H1 (cell line): ENCODE measurements at regions of chr22 and their contacts with region 1.

Region 1: DNA sequence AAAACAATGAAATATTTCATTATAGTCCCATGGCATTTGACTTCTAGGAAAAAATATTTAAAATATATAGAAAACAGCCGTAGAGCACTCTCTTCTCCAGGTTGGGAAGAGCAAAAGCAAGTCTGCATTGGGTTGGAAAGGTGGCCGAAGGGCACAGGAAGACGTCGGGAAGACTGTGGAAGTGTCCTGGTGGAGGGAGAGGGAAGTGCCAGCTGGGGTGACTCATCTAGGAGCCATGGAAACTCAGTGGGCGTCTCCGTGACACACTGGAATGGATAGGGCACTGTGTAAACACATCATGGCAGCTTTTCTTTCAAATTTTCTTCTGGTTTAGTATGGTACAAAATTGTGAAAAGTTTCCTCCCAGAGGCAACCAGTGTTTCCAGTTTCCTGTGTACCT is 12.7 kb downstream of the GTPBP1 start:
- DNase-seq: no peak
- H3K4me3 ChIP-seq: no peak overlapping the region
- H3K27ac ChIP-seq: no peak overlapping the region
- H3K4me1 ChIP-seq: peaks cover 0 to 3% (median under 1%) of the 10 kb centered on the region in 4 experiments; a peak in 4 of 7 replicates
- H3K27me3 ChIP-seq: no peaks in the 10 kb centered on the region
- CTCF ChIP-seq: peak; percentile 24 to 68 (median 53); a peak in 3 of 4 replicates
- EP300 ChIP-seq: no peak
- POLR2A ChIP-seq: no peak
- RAD21 ChIP-seq: peak in 1 of 2 experiments; percentile 23; a peak in 1 of 4 replicates

Region 2: DNA sequence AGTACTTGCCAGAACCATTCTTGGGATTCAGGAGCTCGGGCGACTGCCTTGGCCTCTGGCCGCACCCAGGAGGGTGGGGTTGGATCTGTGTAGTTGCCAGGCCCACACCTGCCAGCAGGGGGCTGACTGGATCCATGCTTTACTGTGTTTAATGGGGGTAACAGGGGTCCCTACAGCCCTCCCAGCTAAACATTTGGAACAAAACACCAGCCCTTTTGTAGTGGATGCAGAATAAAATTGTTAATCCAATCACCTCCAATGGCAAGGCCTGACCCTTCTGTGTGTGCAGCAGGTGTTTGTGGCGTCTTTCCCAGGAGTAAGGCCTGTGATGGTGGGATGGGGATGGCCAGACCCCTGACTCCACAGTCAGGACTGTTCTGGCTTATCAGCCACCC is 14.9 kb after region 1 on chr22:
- CTCF ChIA-PET with region 1: interaction called, 116 read pairs
- POLR2A ChIA-PET with region 1: interaction called, 4 read pairs
- DNase-seq: peak in 1 of 2 experiments; percentile 80
- H3K4me3 ChIP-seq: no peak overlapping the region
- H3K27ac ChIP-seq: no peak overlapping the region
- H3K4me1 ChIP-seq: no peaks in the 10 kb centered on the region
- H3K27me3 ChIP-seq: no peaks in the 10 kb centered on the region
- CTCF ChIP-seq: peak; percentile 57 to 89 (median 70)
- EP300 ChIP-seq: no peak
- POLR2A ChIP-seq: no peak
- RAD21 ChIP-seq: peak; percentile 43 to 63